ENCODE measurements at regions of chr1 and their contacts with region 1.

Region 1: DNA sequence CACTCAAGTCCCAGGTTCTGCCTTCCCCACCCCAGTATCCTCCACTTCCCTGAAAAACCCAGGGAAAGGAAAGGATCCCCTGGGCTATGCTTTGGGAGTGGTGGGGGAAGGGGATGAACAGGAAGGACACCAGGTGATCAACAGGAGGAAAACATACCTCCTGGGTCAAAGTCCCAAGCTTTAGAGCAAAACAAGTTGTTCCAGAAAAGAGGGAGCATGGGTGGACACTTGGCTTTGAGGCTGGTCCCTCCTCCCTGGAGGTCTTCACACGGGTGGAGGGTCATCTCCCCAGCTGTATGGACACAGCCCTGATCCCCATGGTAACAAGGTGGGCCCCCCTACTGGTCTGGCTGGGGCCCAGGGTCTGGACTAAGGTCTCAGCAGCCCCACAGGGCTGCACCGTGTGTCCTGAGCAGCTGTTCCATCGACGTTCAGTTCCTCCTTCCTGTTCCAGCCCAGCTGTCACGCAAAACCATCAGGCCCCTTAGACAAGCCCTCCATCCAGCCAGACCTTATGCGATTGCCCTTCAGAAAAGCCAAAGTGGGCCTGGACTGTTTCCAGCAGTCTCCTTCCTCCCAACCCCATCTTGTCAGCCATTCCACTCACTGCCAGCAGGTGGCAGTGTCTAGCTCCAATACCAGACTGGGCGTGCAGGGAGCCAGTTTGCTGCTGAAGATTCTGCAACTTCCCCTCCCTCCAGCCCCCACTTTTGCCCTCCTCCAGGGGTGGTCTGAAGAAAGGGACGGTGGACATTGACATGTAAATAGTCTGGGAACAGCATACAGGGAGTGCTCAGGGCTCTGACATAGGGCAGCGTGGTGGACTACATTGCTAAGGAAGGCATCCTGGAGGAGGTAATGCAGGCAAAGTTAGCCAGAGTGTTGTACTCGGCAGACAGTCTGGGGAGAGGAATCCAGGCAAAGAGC is 2.9 kb upstream of the PDZK1IP1 start:
- DNase-seq: peak; percentile 92

Region 2: DNA sequence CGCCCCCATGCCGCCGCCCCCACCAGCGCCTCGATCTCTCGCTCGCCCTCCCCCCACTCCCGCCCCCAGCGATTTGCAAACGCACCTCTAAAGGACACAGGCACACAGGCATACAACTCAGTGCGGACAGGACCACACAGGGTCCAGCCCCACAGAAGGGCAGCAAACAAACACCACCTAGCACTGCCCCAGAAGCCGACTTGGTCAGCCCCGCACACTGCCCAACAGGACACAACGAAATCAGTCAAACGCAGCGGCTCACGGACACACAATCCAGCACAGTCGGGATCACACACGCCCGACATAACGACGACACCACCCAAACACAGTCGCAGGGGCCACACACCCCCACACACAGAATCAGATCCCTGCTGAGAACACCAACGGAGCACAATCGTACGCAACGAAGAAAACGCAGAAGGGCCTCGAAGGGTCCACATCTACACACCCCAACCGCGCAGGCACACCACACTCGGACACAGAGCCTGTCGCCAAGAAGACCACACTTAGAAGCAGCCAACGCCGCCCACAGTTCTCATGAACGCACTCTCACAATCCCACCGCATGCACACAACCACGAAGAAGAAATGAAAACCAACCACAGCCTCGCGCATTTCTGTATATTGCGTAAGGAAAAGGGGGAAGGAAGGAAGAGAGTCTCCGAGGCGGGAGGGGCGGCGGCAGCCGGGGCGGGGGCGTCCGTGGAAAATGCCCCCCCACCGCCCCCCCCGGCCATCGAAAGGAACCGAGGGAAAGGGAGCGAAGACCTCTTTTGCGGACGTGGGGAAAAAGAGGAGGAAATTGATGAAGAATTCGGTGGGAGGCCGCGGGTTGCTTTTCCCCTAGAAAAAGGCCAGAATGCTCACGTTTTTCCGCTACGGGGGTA is 38.8 kb after region 1 on chr1:
- intact Hi-C with region 1: loop called in 1 of 2 experiments (anchors 5 kb)
- DNase-seq: no peak

Region 3: DNA sequence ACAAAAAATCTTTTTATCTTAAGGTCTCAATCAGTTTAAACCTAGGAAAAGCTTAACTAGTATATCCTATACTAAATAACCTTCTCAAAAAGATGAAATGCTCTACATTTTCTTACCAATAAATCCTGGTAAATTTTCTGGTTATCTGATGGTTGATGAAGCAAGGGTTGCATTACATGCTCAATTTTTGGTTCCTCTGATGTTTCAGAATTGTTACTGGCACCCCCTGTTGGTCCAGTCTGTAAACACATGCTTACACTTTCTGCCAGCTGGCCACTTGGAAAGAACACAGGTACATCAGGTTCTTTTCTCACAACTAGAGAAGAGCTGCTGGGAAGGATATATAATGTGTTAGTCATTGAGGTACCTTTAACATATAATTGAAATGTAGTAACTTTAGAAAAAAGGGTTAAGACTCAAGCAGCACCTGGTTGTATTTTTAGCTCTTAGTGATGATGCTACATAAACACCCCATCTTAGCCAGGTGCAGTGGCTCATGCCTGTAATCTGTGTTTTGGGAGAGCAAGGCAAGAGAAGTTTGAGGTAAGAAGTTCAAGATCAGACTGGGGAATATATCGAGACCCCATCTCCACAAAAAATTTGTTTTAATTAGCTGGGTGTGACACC is 70.2 kb after region 1 on chr1:
- intact Hi-C with region 1: loop called in 1 of 2 experiments (anchors 10 kb)
- DNase-seq: no peak

Region 4: DNA sequence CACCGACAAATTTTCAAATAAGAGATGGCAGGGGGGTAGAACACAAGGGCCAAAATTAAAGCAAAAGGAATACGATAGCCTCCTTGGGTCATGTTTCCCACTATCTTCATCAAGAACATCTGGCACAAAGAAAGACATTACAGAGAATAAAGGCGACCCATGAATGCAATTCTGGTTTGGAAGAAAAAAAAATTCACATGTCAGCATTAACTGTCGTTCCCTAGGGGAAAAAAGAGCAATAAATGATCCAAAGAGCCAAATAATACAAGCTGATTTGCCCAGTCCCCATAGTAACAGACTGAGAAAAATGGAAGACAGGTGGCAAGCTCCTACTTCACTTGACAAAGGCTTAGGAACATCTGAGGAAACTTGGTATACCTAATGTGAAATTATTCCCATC is 116.7 kb after region 1 on chr1:
- intact Hi-C with region 1: no loop called
- DNase-seq: no peak

Region 5: DNA sequence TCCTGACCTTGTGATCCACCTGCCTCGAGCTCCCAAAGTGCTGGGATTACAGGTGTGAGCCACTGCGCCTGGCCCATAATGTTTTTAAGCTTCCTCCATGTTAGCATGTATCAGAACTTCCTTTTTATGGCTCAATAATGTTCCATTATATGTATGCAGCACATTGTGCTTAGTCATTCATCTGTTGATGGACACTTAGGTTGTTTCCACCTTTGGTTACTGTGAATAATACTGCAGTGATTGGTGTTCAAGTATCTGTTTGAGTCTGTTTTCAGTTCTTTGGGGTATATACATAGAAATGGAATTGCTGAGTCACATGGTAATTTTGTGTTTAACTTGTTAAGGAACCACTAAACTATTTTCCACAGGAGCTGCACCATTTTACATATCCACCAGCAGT is 158.6 kb after region 1 on chr1:
- intact Hi-C with region 1: no loop called
- DNase-seq: no peak

Region 6: DNA sequence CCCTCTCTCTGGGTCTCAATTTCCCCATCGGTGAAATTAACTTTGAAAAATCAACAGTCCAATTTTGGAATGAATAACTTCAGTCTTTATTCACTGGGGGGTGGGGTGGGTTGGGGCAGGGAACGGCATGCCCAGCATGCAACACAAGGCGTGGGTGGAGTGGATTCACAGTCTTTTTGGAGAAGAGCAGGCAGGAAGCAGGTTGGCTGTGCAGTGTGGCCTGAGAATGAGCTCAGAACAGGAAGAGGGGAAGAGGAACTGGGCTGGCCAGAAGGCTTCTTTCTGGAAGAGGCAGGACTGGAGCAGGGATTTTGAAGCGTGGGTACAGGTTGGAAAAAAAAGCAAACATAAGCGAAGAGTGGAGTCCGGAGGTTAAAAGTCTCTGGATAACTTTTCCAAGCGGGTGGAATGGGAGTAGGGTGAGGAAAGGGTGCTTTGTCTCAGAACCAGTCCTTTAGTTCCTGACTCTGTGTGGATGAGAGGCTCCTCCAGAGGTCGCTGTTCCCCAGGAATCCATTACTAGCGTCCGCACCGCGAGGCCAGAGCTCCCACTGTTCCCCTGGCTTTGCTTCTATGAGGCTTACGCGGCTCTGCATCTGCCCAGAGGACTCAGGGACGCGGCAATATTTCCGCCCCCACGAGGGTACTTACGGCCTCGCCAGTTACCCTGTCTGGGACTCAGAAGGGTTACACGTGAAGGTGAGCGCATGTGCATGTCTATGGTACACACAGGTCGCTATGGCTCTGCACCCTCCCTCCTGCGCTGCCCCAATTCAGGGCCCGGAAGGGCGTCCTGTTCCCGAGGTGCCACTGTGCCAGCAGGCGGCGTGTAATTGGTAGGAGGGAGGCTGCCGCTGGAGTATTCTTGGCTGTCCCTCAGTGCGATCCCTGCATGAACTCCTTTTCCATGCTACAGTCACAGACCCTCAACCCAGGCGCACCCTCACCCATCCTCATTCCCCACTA is 239.6 kb after region 1 on chr1:
- intact Hi-C with region 1: loop called (anchors 5 to 10 kb)
- DNase-seq: peak; percentile 93

Region 7: GRCh38 chr1:47437447-47438164 is 244.9 kb after region 1 on chr1 and contains the start of gene FOXD2:
- intact Hi-C with region 1: loop called (anchors 5 to 10 kb)
- DNase-seq: peak; percentile 95
- total RNA-seq, gene FOXD2: 0.19 to 0.37 TPM

Region 8: GRCh38 chr1:47656719-47657685 is 464.3 kb after region 1 on chr1:
- intact Hi-C with region 1: no loop called
- DNase-seq: peak; percentile 91

Region 9: DNA sequence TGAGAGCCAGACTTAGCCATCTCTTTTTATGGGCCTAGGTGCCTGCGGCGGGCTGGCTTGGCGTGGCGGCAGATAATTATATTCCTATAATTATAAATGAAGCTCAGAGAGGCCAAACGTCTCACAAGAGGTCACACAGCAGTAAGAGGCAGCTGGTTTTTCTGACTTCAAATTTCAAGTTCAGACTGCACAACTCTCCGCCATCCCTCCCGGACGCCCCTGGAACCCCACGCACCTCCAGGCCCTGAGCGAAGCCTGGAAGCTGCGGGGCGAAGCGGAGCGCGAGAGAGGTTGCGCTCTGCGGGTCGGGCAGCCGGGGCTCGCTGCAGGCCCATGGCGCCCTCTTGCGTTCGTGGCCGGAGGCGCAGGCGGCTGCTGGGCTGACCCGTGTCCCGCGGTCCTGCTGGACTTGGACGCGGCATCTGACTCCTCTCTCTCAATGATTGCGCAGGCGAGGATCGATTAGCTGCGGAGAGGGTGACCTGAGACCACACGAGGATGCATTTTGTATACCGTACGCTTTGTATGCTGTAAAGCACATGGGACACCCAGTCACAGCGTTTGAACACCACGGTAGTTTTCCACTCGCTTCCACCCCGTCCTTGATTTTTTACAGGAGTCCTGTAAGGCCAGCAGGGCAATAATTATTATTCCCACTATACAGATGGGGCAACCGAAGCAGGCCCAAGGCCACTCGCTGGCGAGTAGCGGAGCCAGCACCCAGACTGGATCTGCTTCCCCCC is 517.8 kb after region 1 on chr1:
- intact Hi-C with region 1: loop called in 1 of 2 experiments (anchors 10 kb)
- DNase-seq: peak; percentile 92